Right ventricle myocardium inferior (tissue), 1 donor: ENCODE measurements at regions of chr18 and their contacts with region 1.

Region 1: GRCh38 chr18:48354746-48355260 is 54.4 kb downstream of the ZBTB7C start:
- DNase-seq: no peak
- ATAC-seq: no peak

Region 2: DNA sequence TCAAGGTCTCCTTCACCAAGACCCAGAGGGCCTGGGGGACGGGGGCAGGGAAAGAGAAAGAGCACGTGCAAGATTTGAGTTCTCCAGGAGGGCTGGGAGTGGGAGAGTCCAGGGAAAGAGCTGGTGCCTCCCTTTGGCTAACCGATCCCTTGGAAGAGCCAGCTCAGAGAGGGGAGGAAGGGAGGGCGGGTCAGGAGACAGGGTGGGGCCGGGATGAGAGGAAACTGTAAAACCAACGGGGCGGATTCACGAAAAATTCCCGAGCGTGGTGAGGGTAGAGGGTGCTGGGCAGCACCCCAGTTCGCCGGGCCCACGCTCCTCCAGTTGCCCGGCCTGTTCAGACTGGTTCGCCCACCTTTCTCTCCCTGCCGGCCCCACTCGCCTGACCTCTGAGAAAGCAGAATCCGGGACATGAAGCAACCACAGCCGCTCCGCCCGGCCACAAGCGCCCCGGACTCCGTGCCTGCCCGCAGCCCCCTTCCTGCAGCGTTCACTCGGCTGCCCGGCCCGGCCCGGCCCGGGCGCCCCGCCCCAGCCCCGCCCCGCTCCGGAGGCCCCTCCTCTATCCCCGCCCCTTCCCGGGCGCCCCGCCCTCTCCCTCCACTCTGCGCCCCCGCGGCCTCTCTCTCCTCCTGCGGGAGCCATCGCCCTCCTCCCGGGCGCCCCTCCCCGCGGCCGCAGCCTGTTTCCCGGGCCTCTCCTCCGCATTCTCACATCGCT is 193.5 kb before region 1 on chr18:
- intact Hi-C with region 1: no loop called
- DNase-seq: peak; percentile 92
- ATAC-seq: peak; percentile 96

Region 3: DNA sequence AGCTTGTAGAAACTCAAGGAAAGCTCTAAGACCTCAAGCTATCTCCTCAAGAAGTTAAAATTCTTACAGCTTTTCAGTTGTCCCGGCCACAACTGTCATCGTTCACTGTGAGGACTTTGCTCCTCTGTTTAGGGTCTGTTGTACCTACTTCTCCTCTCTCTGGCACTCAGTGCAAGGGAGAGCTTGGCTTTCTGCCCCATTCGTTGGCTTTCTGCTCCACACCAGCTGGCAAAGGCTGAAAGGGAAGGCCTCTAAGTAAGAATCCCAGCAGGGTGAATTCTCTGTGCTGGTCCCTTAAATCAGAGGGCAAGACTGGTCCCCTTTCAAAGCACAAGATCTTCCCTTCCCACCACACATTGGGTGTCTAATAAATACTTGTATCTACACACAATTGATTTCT is 37.1 kb after region 1 on chr18:
- intact Hi-C with region 1: loop called (anchors 5 kb)
- DNase-seq: no peak
- ATAC-seq: peak; percentile 70